K562 (cell line): ENCODE measurements at regions of chr4 and their contacts with region 1.

Region 1: GRCh38 chr4:38243388-38244053 is 283.3 kb downstream of the PTTG2 start:
- DNase-seq: peak in 1 of 4 experiments; percentile 22
- ATAC-seq: peak; percentile 82
- H3K4me3 ChIP-seq: no peak overlapping the region
- H3K27ac ChIP-seq: peak overlapping the region; percentile 88
- H3K4me1 ChIP-seq: peaks cover 11 to 18% of the 10 kb centered on the region in 2 experiments
- H3K27me3 ChIP-seq: no peaks in the 10 kb centered on the region
- CTCF ChIP-seq: no peak
- EP300 ChIP-seq: no peak
- POLR2A ChIP-seq: no peak; the same call in 1 of the 2 replicates
- RAD21 ChIP-seq: no peak

Region 2: DNA sequence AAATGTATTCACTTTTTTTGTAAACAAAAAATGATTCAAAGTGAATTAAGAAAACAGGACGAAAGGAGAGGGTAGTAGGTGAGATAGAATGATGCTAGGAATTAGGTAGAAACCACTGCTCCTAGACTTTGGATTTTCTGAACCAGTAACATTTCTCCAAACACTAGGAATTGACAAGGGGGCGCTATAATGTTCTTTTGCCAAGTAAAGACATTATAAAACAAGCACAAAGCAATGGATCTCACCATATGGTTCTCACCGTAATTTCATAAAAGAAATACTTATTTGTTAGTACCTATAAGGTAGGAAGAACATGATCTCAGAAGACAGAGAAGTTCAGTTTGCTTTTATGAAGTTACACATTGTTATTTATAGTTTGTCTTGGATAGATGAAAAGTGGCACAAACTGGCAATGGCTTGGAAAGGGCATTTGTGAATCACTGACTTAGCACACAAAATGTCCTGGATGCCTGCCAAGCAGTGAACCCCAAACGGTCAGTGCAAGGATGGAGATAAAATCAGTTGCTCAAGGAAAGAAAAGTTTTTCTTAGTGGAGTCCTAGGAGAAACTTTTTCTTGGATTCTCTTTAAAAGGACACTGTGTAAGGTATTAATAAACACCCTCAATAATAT is 360.7 kb before region 1 on chr4:
- CTCF ChIA-PET with region 1: no interaction called
- POLR2A ChIA-PET with region 1: no interaction called
- in situ Hi-C with region 1: no loop called
- intact Hi-C with region 1: no loop called
- DNase-seq: peak in 1 of 4 experiments; percentile 7
- ATAC-seq: no peak
- H3K4me3 ChIP-seq: no peak overlapping the region
- H3K27ac ChIP-seq: no peak overlapping the region
- H3K4me1 ChIP-seq: peaks cover 0 to 2% of the 10 kb centered on the region in 2 experiments; a peak in 2 of 5 replicates
- H3K27me3 ChIP-seq: peaks cover 2 to 5% of the 10 kb centered on the region in 2 experiments; a peak in 2 of 5 replicates
- CTCF ChIP-seq: peak in 1 of 3 experiments; percentile 36; a peak in 2 of 6 replicates
- EP300 ChIP-seq: no peak
- POLR2A ChIP-seq: no peak
- RAD21 ChIP-seq: no peak

Region 3: DNA sequence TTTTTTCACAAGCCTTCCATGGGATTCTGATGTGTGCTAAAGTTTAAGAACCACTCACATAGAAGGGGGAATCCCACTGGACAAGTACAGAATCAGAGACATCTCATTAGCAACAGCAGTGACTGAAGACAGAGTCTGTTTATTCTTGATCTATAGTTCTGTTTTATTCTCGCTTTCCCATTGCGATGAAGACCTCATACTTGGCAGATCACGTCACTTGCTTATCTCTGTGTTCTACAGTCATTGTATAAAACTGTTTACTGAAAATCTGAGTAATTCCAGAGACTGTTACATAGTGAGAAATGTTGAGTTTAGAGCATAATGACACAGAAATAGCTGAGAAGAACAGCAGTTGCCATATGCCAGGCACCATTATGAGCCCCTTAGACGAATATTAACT is 97.8 kb before region 1 on chr4:
- CTCF ChIA-PET with region 1: no interaction called
- POLR2A ChIA-PET with region 1: no interaction called
- in situ Hi-C with region 1: no loop called
- intact Hi-C with region 1: no loop called
- DNase-seq: no peak
- ATAC-seq: no peak
- H3K4me3 ChIP-seq: no peak overlapping the region
- H3K27ac ChIP-seq: no peak overlapping the region
- H3K4me1 ChIP-seq: no peaks in the 10 kb centered on the region
- H3K27me3 ChIP-seq: peaks cover 19 to 22% of the 10 kb centered on the region in 2 experiments; a peak in 4 of 5 replicates
- CTCF ChIP-seq: no peak
- EP300 ChIP-seq: no peak
- POLR2A ChIP-seq: no peak
- RAD21 ChIP-seq: no peak

Region 4: GRCh38 chr4:38210391-38211114 is 33.0 kb before region 1 on chr4:
- CTCF ChIA-PET with region 1: no interaction called
- POLR2A ChIA-PET with region 1: no interaction called
- in situ Hi-C with region 1: no loop called
- intact Hi-C with region 1: no loop called
- DNase-seq: no peak
- ATAC-seq: peak; percentile 28; the same call in 1 of the 3 replicates
- H3K4me3 ChIP-seq: no peak overlapping the region
- H3K27ac ChIP-seq: no peak overlapping the region
- H3K4me1 ChIP-seq: no peaks in the 10 kb centered on the region
- H3K27me3 ChIP-seq: no peaks in the 10 kb centered on the region
- CTCF ChIP-seq: no peak
- EP300 ChIP-seq: no peak
- POLR2A ChIP-seq: no peak
- RAD21 ChIP-seq: no peak

Region 5: DNA sequence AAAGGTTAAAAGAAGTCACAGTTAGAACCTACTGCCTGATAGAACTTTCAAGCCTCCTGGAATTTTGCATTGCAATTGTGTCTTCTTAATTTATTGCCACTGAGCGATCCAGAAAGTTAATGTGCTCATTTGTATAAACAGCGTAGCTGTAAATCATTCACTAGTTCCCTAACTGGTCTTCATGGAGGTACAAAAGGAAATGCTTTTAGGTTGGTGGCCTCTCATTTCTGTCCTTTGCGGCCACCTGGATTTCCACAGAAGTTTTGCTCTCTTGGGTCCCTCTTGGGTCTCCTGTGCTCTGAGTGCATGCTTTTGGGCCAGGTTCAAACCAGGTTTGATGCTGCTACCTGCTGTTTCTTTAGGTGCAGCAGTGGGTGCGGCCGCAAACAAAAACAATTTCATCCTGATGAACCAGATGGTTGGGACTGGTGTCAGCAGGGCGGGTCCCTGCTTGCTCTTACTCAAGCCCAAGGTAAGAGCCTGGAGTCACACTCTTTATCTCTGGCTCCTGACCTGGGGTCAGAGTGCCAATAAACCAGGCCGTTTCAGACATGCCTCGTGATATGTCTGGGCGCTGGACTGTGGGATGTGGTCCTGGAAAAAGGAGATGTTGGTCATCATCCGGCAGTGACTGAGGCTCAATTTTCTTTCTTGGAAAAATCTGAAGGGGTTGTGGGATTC is 13.3 kb before region 1 on chr4:
- CTCF ChIA-PET with region 1: no interaction called
- POLR2A ChIA-PET with region 1: interaction called, 11 read pairs
- in situ Hi-C with region 1: no loop called
- intact Hi-C with region 1: no loop called
- DNase-seq: peak; percentile 32 to 82 (median 54)
- ATAC-seq: peak; percentile 92
- H3K4me3 ChIP-seq: no peak overlapping the region
- H3K27ac ChIP-seq: peak overlapping the region; percentile 49; the same call in 1 of the 3 replicates
- H3K4me1 ChIP-seq: peaks cover 15 to 20% of the 10 kb centered on the region in 2 experiments
- H3K27me3 ChIP-seq: no peaks in the 10 kb centered on the region
- CTCF ChIP-seq: no peak
- EP300 ChIP-seq: no peak
- POLR2A ChIP-seq: no peak
- RAD21 ChIP-seq: 0 out of 4 replicates have a peak, but pooled peaks of 1 of the 2 experiments have one; percentile 6

Region 6: DNA sequence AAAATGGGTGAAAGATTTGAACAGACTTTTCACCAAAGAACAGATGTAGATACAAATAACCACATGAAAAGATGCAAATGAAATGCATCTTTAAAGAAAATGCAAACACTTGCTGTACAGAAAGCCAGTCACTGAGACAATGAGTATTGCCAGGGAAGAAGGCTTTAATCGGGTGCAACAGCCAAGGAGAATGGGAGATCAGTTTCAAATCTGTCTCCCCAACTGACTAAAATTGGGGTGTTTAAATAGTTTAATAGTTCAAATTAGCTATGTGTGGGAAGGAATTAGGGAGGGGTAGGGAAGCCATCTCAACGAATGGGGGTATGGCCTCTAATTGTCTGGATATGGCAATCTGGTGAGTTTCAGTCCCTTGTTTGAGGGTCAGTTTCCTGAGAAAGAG is 12.1 kb after region 1 on chr4:
- CTCF ChIA-PET with region 1: no interaction called
- POLR2A ChIA-PET with region 1: interaction called, 11 read pairs
- in situ Hi-C with region 1: no loop called
- intact Hi-C with region 1: no loop called
- DNase-seq: peak in 1 of 4 experiments; percentile 23
- ATAC-seq: no peak
- H3K4me3 ChIP-seq: no peak overlapping the region
- H3K27ac ChIP-seq: no peak overlapping the region
- H3K4me1 ChIP-seq: no peaks in the 10 kb centered on the region; a peak in 1 of 5 replicates
- H3K27me3 ChIP-seq: no peaks in the 10 kb centered on the region
- CTCF ChIP-seq: no peak
- EP300 ChIP-seq: no peak
- POLR2A ChIP-seq: no peak
- RAD21 ChIP-seq: no peak